ENCODE measurements at regions of chr1 and their contacts with region 1.

Region 1: GRCh38 chr1:2221271-2221670 is 6.8 kb upstream of the SKI start:
- DNase-seq: no peak
- ATAC-seq: no peak
- H3K4me3 ChIP-seq: no peak overlapping the region
- H3K27ac ChIP-seq: no peak overlapping the region
- H3K4me1 ChIP-seq: peaks cover under 1% of the 10 kb centered on the region
- H3K27me3 ChIP-seq: no peaks in the 10 kb centered on the region
- CTCF ChIP-seq: no peak

Region 2: GRCh38 chr1:2189459-2190425 is 31.5 kb before region 1 on chr1:
- CTCF ChIA-PET with region 1: interaction called, 3 read pairs
- POLR2A ChIA-PET with region 1: interaction called, 22 read pairs
- in situ Hi-C with region 1: no loop called
- intact Hi-C with region 1: no loop called
- DNase-seq: no peak
- ATAC-seq: peak; percentile 92
- H3K4me3 ChIP-seq: peak overlapping the region; percentile 49 to 62
- H3K27ac ChIP-seq: peak overlapping the region; percentile 83
- H3K4me1 ChIP-seq: peaks cover 33% of the 10 kb centered on the region
- H3K27me3 ChIP-seq: no peaks in the 10 kb centered on the region
- CTCF ChIP-seq: no peak

Region 3: GRCh38 chr1:2233997-2234761 is 12.9 kb after region 1 on chr1:
- CTCF ChIA-PET with region 1: no interaction called
- POLR2A ChIA-PET with region 1: no interaction called
- in situ Hi-C with region 1: no loop called
- intact Hi-C with region 1: no loop called
- DNase-seq: no peak
- ATAC-seq: no peak
- H3K4me3 ChIP-seq: peak overlapping the region in 1 of 2 experiments; percentile 20; a peak in 1 of 4 replicates
- H3K27ac ChIP-seq: no peak overlapping the region; the same call in 1 of the 2 replicates
- H3K4me1 ChIP-seq: peaks cover 42% of the 10 kb centered on the region
- H3K27me3 ChIP-seq: no peaks in the 10 kb centered on the region
- CTCF ChIP-seq: no peak

Region 4: GRCh38 chr1:2330511-2331199 is 109.4 kb after region 1 on chr1:
- CTCF ChIA-PET with region 1: no interaction called
- POLR2A ChIA-PET with region 1: no interaction called
- in situ Hi-C with region 1: no loop called
- intact Hi-C with region 1: no loop called
- DNase-seq: no peak
- ATAC-seq: no peak
- H3K4me3 ChIP-seq: no peak overlapping the region
- H3K27ac ChIP-seq: no peak overlapping the region
- H3K4me1 ChIP-seq: no peaks in the 10 kb centered on the region
- H3K27me3 ChIP-seq: no peaks in the 10 kb centered on the region
- CTCF ChIP-seq: no peak

Measured in Panc1 (cell line).